ENCODE measurements at regions of chr5 and their contacts with region 1.

Region 1: GRCh38 chr5:51181208-51181894 is 201.9 kb upstream of the ISL1 start:
- DNase-seq: no peak
- H3K4me3 ChIP-seq: no peak overlapping the region
- CTCF ChIP-seq: no peak

Region 2: DNA sequence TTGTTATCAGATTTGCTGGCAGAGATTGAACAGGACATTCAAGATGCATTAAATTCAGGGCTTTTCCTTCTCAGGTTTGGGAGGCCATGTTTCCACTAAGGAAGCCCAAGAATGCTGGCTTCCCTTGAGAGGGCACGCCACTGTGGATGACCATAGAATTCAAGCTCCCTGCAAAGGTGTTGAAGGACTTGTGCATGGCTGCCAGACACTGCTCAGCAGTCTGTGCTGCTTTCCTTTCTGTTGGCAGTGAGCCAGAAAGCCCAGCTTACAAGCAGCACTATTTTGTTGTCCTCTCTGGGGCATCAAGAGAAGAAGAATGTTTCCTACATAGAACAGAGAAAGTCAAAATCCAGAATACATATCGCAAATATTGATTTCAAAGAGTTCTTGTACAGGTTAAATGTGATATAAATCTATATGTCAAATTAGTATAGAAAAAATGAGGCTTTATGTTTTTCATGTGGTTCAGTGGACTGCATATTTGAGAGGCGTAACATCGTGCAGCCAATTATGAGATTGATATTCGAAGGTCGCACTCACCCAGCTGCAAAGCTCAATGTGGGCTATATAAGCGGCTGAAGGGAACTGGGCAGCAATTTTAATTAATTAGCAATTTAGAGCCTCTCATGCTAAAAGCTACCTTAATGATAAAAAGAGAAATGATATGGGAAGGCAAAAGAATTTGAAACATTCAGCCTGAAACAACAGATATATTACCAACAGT is 98.8 kb after region 1 on chr5:
- in situ Hi-C with region 1: loop called (anchors 5 kb)
- DNase-seq: no peak
- H3K4me3 ChIP-seq: no peak overlapping the region
- CTCF ChIP-seq: no peak